Posterior vena cava (tissue), 2 donors: ENCODE measurements at regions of chr4 and their contacts with region 1.

Region 1: GRCh38 chr4:17468371-17469221 is 43.3 kb downstream of the QDPR start:
- DNase-seq: no peak

Region 2: GRCh38 chr4:17347445-17347844 is 121.2 kb before region 1 on chr4:
- intact Hi-C with region 1: loop called (anchors 5 to 10 kb)
- DNase-seq: no peak

Region 3: GRCh38 chr4:17356926-17357325 is 111.7 kb before region 1 on chr4:
- intact Hi-C with region 1: loop called in 1 of 2 experiments (anchors 10 kb)
- DNase-seq: no peak

Region 4: GRCh38 chr4:17414392-17414791 is 54.2 kb before region 1 on chr4:
- intact Hi-C with region 1: no loop called
- DNase-seq: no peak

Region 5: DNA sequence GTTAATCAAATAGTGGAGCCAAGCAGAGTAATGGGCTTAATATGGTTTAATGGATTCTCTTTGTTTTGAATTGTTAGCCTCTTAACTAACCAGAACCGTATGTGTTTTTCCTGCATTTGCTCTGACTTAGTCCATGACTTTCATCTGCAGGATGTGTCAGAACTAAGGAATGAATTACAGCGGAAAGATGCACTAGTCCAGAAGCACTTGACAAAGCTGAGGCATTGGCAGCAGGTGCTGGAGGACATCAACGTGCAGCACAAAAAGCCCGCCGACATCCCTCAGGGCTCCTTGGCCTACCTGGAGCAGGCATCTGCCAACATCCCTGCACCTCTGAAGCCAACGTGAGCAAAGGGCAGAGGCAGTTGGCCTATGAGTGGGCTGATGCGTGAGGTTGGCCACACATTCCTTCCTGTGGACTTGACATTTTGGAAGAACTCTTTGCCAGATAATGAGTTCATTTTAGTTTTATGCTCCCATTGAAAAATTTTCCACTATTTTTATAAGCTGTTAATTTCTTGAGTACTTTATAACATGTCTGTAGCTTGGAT is 154.9 kb after region 1 on chr4:
- intact Hi-C with region 1: no loop called
- DNase-seq: no peak